CD4-positive, alpha-beta T cell (primary cell): ENCODE measurements at regions of chr16 and their contacts with region 1.

Region 1: GRCh38 chr16:56988948-56989945 is at the start of gene NLRC5:
- DNase-seq: peak; percentile 82 to 95 (median 89)
- ATAC-seq: peak; percentile 90
- H3K4me3 ChIP-seq: peak within 1 kb of the TSS; percentile 90
- H3K4me3 Mint-ChIP-seq: peak within 1 kb of the TSS; percentile 99
- H3K27ac ChIP-seq: peak within 1 kb of the TSS; percentile 85 to 93
- H3K27ac Mint-ChIP-seq: peak within 1 kb of the TSS; percentile 96
- H3K4me1 ChIP-seq: peaks cover 81% of the 10 kb centered on the region
- H3K4me1 Mint-ChIP-seq: peaks cover 92% of the 10 kb centered on the region
- H3K27me3 ChIP-seq: no peaks in the 10 kb centered on the region
- H3K27me3 Mint-ChIP-seq: no peaks in the 10 kb centered on the region
- CTCF ChIP-seq: no peak
- total RNA-seq, gene NLRC5: 424 to 434 TPM

Region 2: DNA sequence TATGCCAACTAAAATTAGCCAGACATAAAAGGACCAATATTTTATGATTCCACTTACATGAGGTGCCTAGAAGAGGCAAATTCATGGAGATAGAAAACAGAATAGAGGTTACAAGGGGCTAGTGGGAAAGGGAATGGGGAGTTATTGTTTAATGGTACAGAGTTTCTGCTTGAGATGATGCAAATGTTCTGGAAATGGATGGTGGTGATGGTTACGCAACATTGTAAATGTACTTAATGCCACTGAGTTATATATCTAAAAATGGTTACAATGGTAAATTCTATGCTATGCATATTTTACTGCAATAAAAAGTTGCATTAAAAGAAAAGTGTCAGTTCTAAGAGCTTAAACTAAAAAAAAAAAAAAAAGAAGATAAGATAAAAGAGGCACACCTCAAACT is 289.1 kb before region 1 on chr16:
- CTCF ChIA-PET with region 1: no interaction called
- POLR2A ChIA-PET with region 1: no interaction called
- intact Hi-C with region 1: no loop called
- DNase-seq: no peak
- ATAC-seq: no peak
- H3K4me3 ChIP-seq: no peak overlapping the region
- H3K4me3 Mint-ChIP-seq: no peak overlapping the region
- H3K27ac ChIP-seq: no peak overlapping the region
- H3K27ac Mint-ChIP-seq: no peak overlapping the region
- H3K4me1 ChIP-seq: peaks cover 3% of the 10 kb centered on the region
- H3K4me1 Mint-ChIP-seq: peaks cover 9% of the 10 kb centered on the region
- H3K27me3 ChIP-seq: no peaks in the 10 kb centered on the region
- H3K27me3 Mint-ChIP-seq: no peaks in the 10 kb centered on the region
- CTCF ChIP-seq: no peak

Region 3: DNA sequence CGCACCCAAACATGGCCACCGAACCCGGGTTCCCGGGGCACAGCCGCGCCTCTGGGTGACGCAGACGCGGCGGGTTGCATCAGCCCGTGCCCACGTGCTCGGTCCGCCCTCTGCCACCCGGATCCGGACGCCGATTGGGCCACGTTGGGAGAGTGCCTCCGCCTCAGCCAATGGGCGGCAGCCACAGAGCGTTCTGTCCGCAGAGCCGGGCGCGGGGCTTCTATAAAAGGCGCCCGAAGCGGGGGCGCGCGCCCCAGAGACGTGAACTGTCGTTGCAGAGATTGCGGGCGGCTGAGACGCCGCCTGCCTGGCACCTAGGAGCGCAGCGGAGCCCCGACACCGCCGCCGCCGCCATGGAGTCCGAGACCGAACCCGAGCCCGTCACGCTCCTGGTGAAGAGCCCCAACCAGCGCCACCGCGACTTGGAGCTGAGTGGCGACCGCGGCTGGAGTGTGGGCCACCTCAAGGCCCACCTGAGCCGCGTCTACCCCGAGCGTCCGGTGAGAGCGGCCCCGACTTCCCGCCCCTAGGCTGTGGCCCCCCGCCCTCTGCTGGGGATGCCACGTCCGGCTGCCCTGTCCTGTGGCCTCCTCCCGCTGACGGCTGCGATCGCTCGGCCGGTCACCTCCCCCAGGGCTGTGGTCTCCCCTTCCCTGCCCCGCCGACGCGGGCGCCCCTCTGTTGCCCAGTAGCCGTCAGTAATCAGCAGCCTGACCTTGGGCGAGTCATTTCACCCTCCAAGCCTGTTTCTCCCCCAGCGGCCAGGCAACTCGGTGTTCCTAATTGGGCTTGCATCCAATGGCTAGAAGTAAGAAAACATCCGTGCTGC is 57.1 kb before region 1 on chr16 and contains the start of gene HERPUD1:
- CTCF ChIA-PET with region 1: no interaction called
- POLR2A ChIA-PET with region 1: interaction called, 31 read pairs
- intact Hi-C with region 1: loop called (anchors 2 to 5 kb)
- DNase-seq: peak; percentile 98 to 100 (median 99)
- ATAC-seq: peak; percentile 96
- H3K4me3 ChIP-seq: peak within 1 kb of the TSS; percentile 99
- H3K4me3 Mint-ChIP-seq: peak within 1 kb of the TSS; percentile 99
- H3K27ac ChIP-seq: peak within 1 kb of the TSS; percentile 81 to 93
- H3K27ac Mint-ChIP-seq: peak within 1 kb of the TSS; percentile 96
- H3K4me1 ChIP-seq: peaks cover 28% of the 10 kb centered on the region
- H3K4me1 Mint-ChIP-seq: peaks cover 39% of the 10 kb centered on the region
- H3K27me3 ChIP-seq: no peaks in the 10 kb centered on the region
- H3K27me3 Mint-ChIP-seq: no peaks in the 10 kb centered on the region
- CTCF ChIP-seq: peak; percentile 27
- total RNA-seq, gene HERPUD1: 217 to 227 TPM

Region 4: GRCh38 chr16:57000271-57001025 is 11.2 kb after region 1 on chr16:
- CTCF ChIA-PET with region 1: interaction called, 6 read pairs
- POLR2A ChIA-PET with region 1: interaction called, 68 read pairs
- intact Hi-C with region 1: loop called in 1 of 2 experiments (anchors 1 kb)
- DNase-seq: peak in 5 of 14 experiments; percentile 30 to 61 (median 45)
- ATAC-seq: peak; percentile 54
- H3K4me3 ChIP-seq: peak overlapping the region; percentile 32
- H3K4me3 Mint-ChIP-seq: peak overlapping the region; percentile 27
- H3K27ac ChIP-seq: peak overlapping the region; percentile 69 to 88
- H3K27ac Mint-ChIP-seq: peak overlapping the region; percentile 96
- H3K4me1 ChIP-seq: peaks cover 89% of the 10 kb centered on the region
- H3K4me1 Mint-ChIP-seq: peaks cover 96% of the 10 kb centered on the region
- H3K27me3 ChIP-seq: no peaks in the 10 kb centered on the region
- H3K27me3 Mint-ChIP-seq: no peaks in the 10 kb centered on the region
- CTCF ChIP-seq: no peak

Region 5: DNA sequence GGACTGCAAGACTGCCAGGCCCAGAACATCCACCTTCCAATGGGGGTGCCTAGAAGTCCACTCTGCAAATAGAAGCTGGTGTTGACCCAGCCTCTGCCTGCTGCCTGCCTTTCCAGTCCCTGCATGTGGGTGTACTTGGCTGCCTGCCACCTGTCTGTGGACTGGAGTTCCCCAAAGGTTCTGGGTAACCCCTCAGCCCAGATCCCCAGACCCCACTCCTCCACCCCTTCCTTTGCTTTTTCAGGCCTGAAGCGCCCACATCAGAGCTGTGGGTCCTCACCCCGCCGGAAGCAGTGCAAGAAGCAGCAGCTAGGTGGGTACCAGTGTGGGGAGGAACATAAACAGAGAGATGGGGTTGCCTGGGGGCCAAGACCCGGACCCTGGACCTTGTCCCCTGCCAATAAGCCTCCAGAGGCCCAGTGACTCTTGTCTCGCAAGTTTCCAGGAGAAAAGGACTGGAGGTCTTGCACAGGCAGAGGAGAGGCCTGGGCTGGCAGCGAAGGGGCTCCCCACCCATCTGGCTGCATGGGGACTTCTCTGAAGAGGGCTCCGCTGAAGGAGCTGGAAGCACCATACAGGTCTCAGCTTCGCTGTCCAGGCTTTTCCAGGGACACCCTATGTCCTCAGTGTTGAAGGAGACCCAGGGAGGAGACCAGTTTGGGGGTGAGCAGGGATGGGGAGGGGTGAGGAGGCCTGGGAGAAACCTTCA is 34.4 kb after region 1 on chr16:
- CTCF ChIA-PET with region 1: interaction called, 3 read pairs
- POLR2A ChIA-PET with region 1: interaction called, 55 read pairs
- intact Hi-C with region 1: loop called in 1 of 2 experiments (anchors 5 kb)
- DNase-seq: peak; percentile 44 to 93 (median 68)
- ATAC-seq: peak; percentile 89
- H3K4me3 ChIP-seq: peak overlapping the region; percentile 17
- H3K4me3 Mint-ChIP-seq: peak overlapping the region; percentile 27
- H3K27ac ChIP-seq: peak overlapping the region; percentile 23 to 69
- H3K27ac Mint-ChIP-seq: peak overlapping the region; percentile 84
- H3K4me1 ChIP-seq: peaks cover 93% of the 10 kb centered on the region
- H3K4me1 Mint-ChIP-seq: peaks cover 92% of the 10 kb centered on the region
- H3K27me3 ChIP-seq: no peaks in the 10 kb centered on the region
- H3K27me3 Mint-ChIP-seq: no peaks in the 10 kb centered on the region
- CTCF ChIP-seq: no peak

Region 6: DNA sequence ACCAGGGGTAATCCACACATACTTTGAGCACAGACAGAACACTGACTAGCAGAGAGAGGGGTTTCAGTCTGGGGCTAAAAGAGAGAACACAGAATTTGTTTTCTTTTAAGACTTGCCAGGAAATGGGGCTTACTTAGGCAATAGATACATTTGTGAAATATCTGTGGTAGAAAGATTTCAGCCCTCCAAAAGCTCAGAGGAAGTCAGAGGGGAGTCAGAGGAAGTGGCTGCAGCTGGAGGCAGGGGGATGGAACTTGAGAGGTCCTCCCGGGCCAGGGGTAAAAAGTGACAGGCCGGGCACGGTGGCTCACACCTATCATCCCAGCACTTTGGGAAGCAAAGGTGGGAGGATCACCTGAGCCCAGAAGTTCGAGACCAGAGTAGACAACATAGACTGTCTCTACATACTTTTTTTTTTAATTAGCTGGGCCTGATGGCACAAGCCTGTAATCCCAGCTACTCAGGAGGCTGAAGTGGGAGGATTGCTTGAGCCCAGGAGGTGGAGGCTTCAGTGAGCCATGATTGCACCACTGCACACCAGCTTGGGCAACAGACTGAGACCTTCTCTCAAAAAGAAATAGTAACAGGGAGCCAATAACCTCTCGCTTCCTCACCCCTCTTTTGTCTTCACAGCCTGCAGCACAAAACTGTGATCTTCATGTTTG is 50.0 kb after region 1 on chr16:
- CTCF ChIA-PET with region 1: interaction called, 11 read pairs
- POLR2A ChIA-PET with region 1: interaction called, 81 read pairs
- intact Hi-C with region 1: loop called (anchors 1 to 2 kb)
- DNase-seq: peak in 5 of 14 experiments; percentile 11 to 68 (median 41)
- ATAC-seq: peak; percentile 7
- H3K4me3 ChIP-seq: no peak overlapping the region
- H3K4me3 Mint-ChIP-seq: peak overlapping the region; percentile 79
- H3K27ac ChIP-seq: peak overlapping the region; percentile 81 to 88
- H3K27ac Mint-ChIP-seq: peak overlapping the region; percentile 94
- H3K4me1 ChIP-seq: peaks cover 98% of the 10 kb centered on the region
- H3K4me1 Mint-ChIP-seq: peaks cover 91% of the 10 kb centered on the region
- H3K27me3 ChIP-seq: no peaks in the 10 kb centered on the region
- H3K27me3 Mint-ChIP-seq: no peaks in the 10 kb centered on the region
- CTCF ChIP-seq: no peak

Region 7: DNA sequence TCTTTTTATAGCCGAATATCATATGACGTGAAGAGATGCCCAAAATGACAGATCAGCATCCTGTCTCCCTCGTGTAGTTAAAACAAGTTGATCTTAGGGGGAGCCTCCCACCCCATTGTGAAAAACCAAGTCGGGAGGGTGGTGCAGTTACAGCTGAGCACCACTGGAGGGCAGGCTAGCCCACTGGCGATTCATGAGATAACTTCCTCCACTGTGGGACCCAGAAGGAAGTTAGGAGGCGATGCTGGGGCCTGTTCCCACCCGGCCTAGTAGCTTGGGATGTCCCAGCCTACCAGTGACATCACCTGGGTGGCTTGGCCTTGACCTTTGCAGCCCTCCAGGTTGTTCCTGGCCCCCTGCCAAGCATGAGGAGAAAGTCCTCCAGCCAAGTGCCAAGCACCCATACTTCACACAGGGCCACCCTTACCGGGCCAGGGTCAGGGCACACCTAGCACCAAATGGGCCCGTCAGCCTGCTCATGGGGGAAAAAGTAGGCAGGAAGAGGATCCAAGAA is 95.1 kb after region 1 on chr16:
- CTCF ChIA-PET with region 1: no interaction called
- POLR2A ChIA-PET with region 1: interaction called, 10 read pairs
- intact Hi-C with region 1: no loop called
- DNase-seq: peak; percentile 56 to 90 (median 70)
- ATAC-seq: peak; percentile 96
- H3K4me3 ChIP-seq: no peak overlapping the region
- H3K4me3 Mint-ChIP-seq: no peak overlapping the region
- H3K27ac ChIP-seq: peak overlapping the region; percentile 43 to 57
- H3K27ac Mint-ChIP-seq: peak overlapping the region; percentile 84
- H3K4me1 ChIP-seq: peaks cover 11% of the 10 kb centered on the region
- H3K4me1 Mint-ChIP-seq: peaks cover 12% of the 10 kb centered on the region
- H3K27me3 ChIP-seq: no peaks in the 10 kb centered on the region
- H3K27me3 Mint-ChIP-seq: no peaks in the 10 kb centered on the region
- CTCF ChIP-seq: peak; percentile 92

Region 8: GRCh38 chr16:57260294-57260929 is 271.2 kb after region 1 on chr16:
- CTCF ChIA-PET with region 1: no interaction called
- POLR2A ChIA-PET with region 1: no interaction called
- intact Hi-C with region 1: no loop called
- DNase-seq: peak in 10 of 14 experiments; percentile 13 to 76 (median 40)
- ATAC-seq: peak; percentile 67
- H3K4me3 ChIP-seq: no peak overlapping the region
- H3K4me3 Mint-ChIP-seq: peak overlapping the region; percentile 68
- H3K27ac ChIP-seq: no peak overlapping the region
- H3K27ac Mint-ChIP-seq: peak overlapping the region; percentile 90
- H3K4me1 ChIP-seq: peaks cover 29% of the 10 kb centered on the region
- H3K4me1 Mint-ChIP-seq: peaks cover 23% of the 10 kb centered on the region
- H3K27me3 ChIP-seq: no peaks in the 10 kb centered on the region
- H3K27me3 Mint-ChIP-seq: no peaks in the 10 kb centered on the region
- CTCF ChIP-seq: no peak